B cell (primary cell): ENCODE measurements at regions of chr22 and their contacts with region 1.

Region 1: GRCh38 chr22:36331306-36331911 is 56.4 kb downstream of the MYH9 start:
- DNase-seq: peak; percentile 87
- ATAC-seq: peak; percentile 66
- H3K4me3 ChIP-seq: peak overlapping the region in 4 of 5 experiments; percentile 14 to 58 (median 30)
- H3K4me3 Mint-ChIP-seq: peak overlapping the region; percentile 84
- H3K27ac ChIP-seq: peak overlapping the region; percentile 83 to 86
- H3K27ac Mint-ChIP-seq: peak overlapping the region; percentile 97
- H3K4me1 ChIP-seq: peaks cover 78 to 90% of the 10 kb centered on the region in 2 donors
- H3K4me1 Mint-ChIP-seq: peaks cover 89% of the 10 kb centered on the region
- H3K27me3 ChIP-seq: no peaks in the 10 kb centered on the region
- H3K27me3 Mint-ChIP-seq: no peaks in the 10 kb centered on the region
- CTCF ChIP-seq: no peak

Region 2: GRCh38 chr22:36359181-36359996 is 28.0 kb after region 1 on chr22:
- CTCF ChIA-PET with region 1: interaction called, 6 read pairs
- POLR2A ChIA-PET with region 1: no interaction called
- intact Hi-C with region 1: loop called (anchors 1 kb)
- DNase-seq: peak; percentile 84
- ATAC-seq: peak; percentile 79
- H3K4me3 ChIP-seq: peak overlapping the region in 1 of 5 experiments; percentile 18
- H3K4me3 Mint-ChIP-seq: peak overlapping the region; percentile 74
- H3K27ac ChIP-seq: peak overlapping the region; percentile 56 to 92
- H3K27ac Mint-ChIP-seq: peak overlapping the region; percentile 81
- H3K4me1 ChIP-seq: peaks cover 95 to 98% of the 10 kb centered on the region in 2 donors
- H3K4me1 Mint-ChIP-seq: peaks cover 93% of the 10 kb centered on the region
- H3K27me3 ChIP-seq: no peaks in the 10 kb centered on the region
- H3K27me3 Mint-ChIP-seq: no peaks in the 10 kb centered on the region
- CTCF ChIP-seq: no peak

Region 3: DNA sequence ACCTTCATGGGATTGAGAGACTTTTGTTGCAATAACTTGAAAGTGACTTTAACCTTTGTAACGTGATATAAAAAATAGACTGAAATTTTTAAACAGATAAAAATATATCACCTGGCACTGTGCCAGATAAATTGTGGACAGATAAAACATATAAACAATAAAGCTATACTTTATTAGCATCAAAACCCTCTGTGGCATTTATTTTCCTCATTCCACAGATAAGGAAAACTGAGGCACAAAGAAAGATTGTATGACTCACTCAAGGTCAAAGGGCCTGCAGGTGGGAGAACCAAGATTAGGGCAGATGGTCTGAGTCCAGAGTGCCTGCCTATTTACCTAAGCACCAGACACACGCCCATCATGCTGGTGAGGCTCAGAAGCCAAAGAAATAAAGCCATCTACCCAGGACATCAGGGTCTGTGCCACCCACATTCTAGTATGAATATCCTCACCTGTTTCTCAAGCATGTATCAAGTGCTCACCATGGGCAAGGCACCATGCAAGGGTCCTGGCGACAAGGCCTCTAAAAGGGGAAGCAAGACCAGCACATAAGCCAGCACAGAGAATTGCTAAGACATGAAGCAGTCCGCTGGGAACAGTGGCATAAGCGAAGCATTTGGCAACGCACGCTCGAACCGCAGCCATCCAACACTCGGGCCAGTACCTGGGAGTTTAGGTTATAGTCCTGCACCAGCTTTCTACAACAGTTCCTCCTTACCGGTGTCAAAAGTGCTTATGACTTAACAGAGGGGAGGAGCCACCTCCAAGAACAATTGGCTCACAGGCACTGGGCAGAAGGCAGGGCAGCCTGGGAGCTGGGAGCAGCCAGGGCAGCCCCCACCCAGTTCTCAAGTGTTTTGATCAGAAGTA is 38.7 kb after region 1 on chr22:
- CTCF ChIA-PET with region 1: interaction called, 33 read pairs
- POLR2A ChIA-PET with region 1: interaction called, 5 read pairs
- intact Hi-C with region 1: no loop called
- DNase-seq: peak; percentile 77
- ATAC-seq: peak; percentile 78
- H3K4me3 ChIP-seq: peak overlapping the region in 2 of 5 experiments; percentile 6 to 29
- H3K4me3 Mint-ChIP-seq: peak overlapping the region; percentile 85
- H3K27ac ChIP-seq: peak overlapping the region; percentile 52 to 83
- H3K27ac Mint-ChIP-seq: peak overlapping the region; percentile 90
- H3K4me1 ChIP-seq: peaks cover 92 to 99% of the 10 kb centered on the region in 2 donors
- H3K4me1 Mint-ChIP-seq: peaks cover 90% of the 10 kb centered on the region
- H3K27me3 ChIP-seq: no peaks in the 10 kb centered on the region
- H3K27me3 Mint-ChIP-seq: no peaks in the 10 kb centered on the region
- CTCF ChIP-seq: no peak

Region 4: GRCh38 chr22:36377022-36377631 is 45.7 kb after region 1 on chr22:
- CTCF ChIA-PET with region 1: interaction called, 33 read pairs
- POLR2A ChIA-PET with region 1: interaction called, 14 read pairs
- intact Hi-C with region 1: no loop called
- DNase-seq: peak; percentile 71
- ATAC-seq: peak; percentile 71
- H3K4me3 ChIP-seq: peak overlapping the region in 4 of 5 experiments; percentile 7 to 59 (median 38)
- H3K4me3 Mint-ChIP-seq: peak overlapping the region; percentile 70
- H3K27ac ChIP-seq: peak overlapping the region; percentile 88 to 90
- H3K27ac Mint-ChIP-seq: peak overlapping the region; percentile 88
- H3K4me1 ChIP-seq: peaks cover 98 to 99% of the 10 kb centered on the region in 2 donors
- H3K4me1 Mint-ChIP-seq: peaks cover 86% of the 10 kb centered on the region
- H3K27me3 ChIP-seq: no peaks in the 10 kb centered on the region
- H3K27me3 Mint-ChIP-seq: no peaks in the 10 kb centered on the region
- CTCF ChIP-seq: no peak

Region 5: DNA sequence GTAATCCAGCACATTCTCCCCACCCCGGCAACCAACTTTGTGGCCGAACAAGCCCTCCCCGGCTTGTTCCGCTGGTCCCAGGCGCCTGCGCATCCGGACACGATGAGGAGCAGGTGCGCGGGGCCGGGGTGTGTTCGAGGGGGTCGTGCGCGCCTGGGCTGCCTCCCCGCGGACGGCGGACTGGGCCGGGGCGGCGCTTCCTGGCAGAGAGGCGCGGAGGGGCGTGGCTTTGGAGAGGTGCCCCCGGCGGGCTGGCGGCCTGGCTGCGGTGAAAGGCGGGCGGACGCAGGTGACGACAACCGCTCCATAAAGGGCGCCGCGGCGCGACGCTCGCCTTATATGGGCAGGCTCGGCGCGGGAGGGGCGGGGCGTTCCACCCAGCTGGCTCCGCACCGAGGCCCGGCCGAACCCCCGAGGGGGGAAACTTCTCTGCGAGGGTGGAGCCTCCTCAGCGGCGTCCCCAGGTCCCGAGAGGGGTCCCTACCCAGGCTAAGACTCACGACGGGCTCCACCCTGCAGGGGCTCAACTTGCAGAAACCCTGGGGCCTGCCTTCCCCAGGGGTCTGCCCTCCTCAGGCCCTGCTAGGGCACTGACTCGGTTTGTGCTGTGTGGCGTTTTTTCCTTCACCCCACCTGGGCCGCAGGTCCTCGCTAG is 123.6 kb after region 1 on chr22:
- CTCF ChIA-PET with region 1: interaction called, 5 read pairs
- POLR2A ChIA-PET with region 1: interaction called, 6 read pairs
- intact Hi-C with region 1: loop called (anchors 1 kb)
- DNase-seq: peak; percentile 96
- ATAC-seq: peak; percentile 62
- H3K4me3 ChIP-seq: peak overlapping the region; percentile 18 to 59 (median 54)
- H3K4me3 Mint-ChIP-seq: peak overlapping the region; percentile 77
- H3K27ac ChIP-seq: peak overlapping the region; percentile 84 to 93
- H3K27ac Mint-ChIP-seq: peak overlapping the region; percentile 91
- H3K4me1 ChIP-seq: peaks cover 50 to 60% of the 10 kb centered on the region in 2 donors
- H3K4me1 Mint-ChIP-seq: peaks cover 45% of the 10 kb centered on the region
- H3K27me3 ChIP-seq: no peaks in the 10 kb centered on the region
- H3K27me3 Mint-ChIP-seq: no peaks in the 10 kb centered on the region
- CTCF ChIP-seq: no peak

Region 6: GRCh38 chr22:36659762-36660509 is 328.5 kb after region 1 on chr22:
- CTCF ChIA-PET with region 1: no interaction called
- POLR2A ChIA-PET with region 1: no interaction called
- intact Hi-C with region 1: no loop called
- DNase-seq: no peak
- ATAC-seq: no peak
- H3K4me3 ChIP-seq: no peak overlapping the region
- H3K4me3 Mint-ChIP-seq: no peak overlapping the region
- H3K27ac ChIP-seq: no peak overlapping the region
- H3K27ac Mint-ChIP-seq: no peak overlapping the region
- H3K4me1 ChIP-seq: no peaks in the 10 kb centered on the region
- H3K4me1 Mint-ChIP-seq: no peaks in the 10 kb centered on the region
- H3K27me3 ChIP-seq: peaks cover 0 to 13% (median 1%) of the 10 kb centered on the region in 4 experiments
- H3K27me3 Mint-ChIP-seq: peaks cover 61% of the 10 kb centered on the region
- CTCF ChIP-seq: no peak